ENCODE measurements at regions of chr19 and their contacts with region 1.

Region 1: DNA sequence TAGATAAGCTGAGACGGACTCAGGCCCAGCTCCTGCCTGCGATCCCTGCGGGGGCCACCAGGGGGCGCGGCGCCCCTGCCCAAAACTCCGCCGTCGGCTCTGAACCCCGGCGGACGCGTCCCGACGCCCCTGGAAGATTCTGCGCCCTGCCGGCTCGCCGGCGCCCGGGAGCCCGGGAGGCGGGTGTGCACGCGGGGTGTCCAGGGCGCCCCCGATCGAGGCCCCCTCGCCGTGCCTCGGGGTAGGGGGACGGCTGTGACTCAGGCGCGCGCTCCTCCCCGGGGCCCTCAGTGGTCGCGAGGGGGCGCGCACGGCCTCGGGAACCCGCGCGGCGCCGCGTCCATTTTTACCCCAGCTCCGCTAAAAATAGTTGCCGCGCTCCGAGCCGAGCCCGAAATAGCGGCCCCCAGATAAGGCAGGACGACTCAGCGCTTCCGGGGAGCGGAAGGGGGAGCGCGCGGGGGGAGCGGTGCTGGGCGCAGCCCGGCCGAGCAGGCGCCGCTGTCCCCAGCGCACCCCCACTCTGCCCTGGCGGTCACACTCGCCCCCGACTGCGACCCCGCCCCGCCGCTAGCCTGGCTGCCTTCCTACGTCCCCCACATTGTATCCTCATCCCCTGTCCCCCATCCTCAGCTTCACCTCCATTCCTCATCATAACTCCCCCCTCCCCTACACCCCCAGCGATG is 16.0 kb upstream of the ERCC1 start:
- DNase-seq: peak; percentile 93
- ATAC-seq: peak; percentile 79
- H3K4me3 Mint-ChIP-seq: peak overlapping the region; percentile 64
- H3K27ac Mint-ChIP-seq: peak overlapping the region; percentile 83
- H3K4me1 Mint-ChIP-seq: peaks cover 30% of the 10 kb centered on the region
- H3K27me3 Mint-ChIP-seq: no peaks in the 10 kb centered on the region

Region 2: DNA sequence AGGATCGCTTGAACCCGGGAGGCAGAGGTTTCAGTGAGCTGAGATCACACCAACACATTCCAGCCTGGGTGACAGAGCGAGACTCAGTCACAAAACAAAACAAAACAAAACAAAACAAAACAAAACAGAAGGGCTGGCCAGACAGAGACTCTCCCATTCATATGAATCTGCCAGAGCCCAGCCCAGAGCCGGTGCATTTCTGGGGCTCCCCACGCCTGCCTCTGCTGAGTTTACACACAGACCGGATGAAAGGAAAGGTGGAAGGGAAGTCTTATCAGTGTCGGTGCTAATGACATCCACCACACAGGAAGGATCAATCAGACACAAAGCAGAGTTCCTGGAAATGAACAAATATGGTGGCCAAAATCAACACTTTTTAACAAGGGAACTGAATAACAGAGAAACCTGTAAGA is 268.5 kb before region 1 on chr19:
- CTCF ChIA-PET with region 1: no interaction called
- DNase-seq: peak; percentile 75
- ATAC-seq: peak; percentile 85
- H3K4me3 Mint-ChIP-seq: peak overlapping the region; percentile 70
- H3K27ac Mint-ChIP-seq: peak overlapping the region; percentile 96
- H3K4me1 Mint-ChIP-seq: peaks cover 46% of the 10 kb centered on the region
- H3K27me3 Mint-ChIP-seq: no peaks in the 10 kb centered on the region

Region 3: GRCh38 chr19:45405435-45406225 is 34.1 kb before region 1 on chr19:
- CTCF ChIA-PET with region 1: interaction called, 23 read pairs
- DNase-seq: peak; percentile 92
- ATAC-seq: peak; percentile 65
- H3K4me3 Mint-ChIP-seq: peak overlapping the region; percentile 94
- H3K27ac Mint-ChIP-seq: peak overlapping the region; percentile 88
- H3K4me1 Mint-ChIP-seq: peaks cover 31% of the 10 kb centered on the region
- H3K27me3 Mint-ChIP-seq: peaks cover 30% of the 10 kb centered on the region

Region 4: DNA sequence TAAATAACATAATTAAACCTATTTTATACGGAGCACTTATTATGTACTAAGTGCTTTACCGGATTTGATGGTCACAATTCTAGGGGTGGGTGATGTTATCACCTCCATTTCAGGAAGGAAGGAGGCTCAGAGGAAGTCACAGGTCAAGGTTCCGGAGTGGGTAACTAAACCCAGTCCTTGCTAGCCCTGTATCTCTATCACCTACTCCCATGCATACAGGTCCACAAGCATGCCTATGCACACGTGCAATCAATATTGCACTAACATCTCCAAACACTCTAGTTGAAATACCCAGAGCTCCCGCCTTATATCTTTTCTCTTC is 10.3 kb after region 1 on chr19:
- CTCF ChIA-PET with region 1: interaction called, 42 read pairs
- DNase-seq: no peak
- ATAC-seq: peak; percentile 46
- H3K4me3 Mint-ChIP-seq: peak overlapping the region; percentile 93
- H3K27ac Mint-ChIP-seq: peak overlapping the region; percentile 99
- H3K4me1 Mint-ChIP-seq: peaks cover 46% of the 10 kb centered on the region
- H3K27me3 Mint-ChIP-seq: peaks cover 6% of the 10 kb centered on the region

Region 5: GRCh38 chr19:45469132-45469944 is 29.6 kb after region 1 on chr19:
- CTCF ChIA-PET with region 1: interaction called, 1,113 read pairs
- DNase-seq: peak; percentile 96
- ATAC-seq: peak; percentile 32
- H3K4me3 Mint-ChIP-seq: peak overlapping the region; percentile 86
- H3K27ac Mint-ChIP-seq: peak overlapping the region; percentile 96
- H3K4me1 Mint-ChIP-seq: peaks cover 24% of the 10 kb centered on the region
- H3K27me3 Mint-ChIP-seq: peaks cover 26% of the 10 kb centered on the region

Region 6: GRCh38 chr19:45496349-45496953 is 56.7 kb after region 1 on chr19:
- CTCF ChIA-PET with region 1: interaction called, 1,113 read pairs
- DNase-seq: peak; percentile 72
- ATAC-seq: peak; percentile 25
- H3K4me3 Mint-ChIP-seq: peak overlapping the region; percentile 29
- H3K27ac Mint-ChIP-seq: no peak overlapping the region
- H3K4me1 Mint-ChIP-seq: peaks cover 40% of the 10 kb centered on the region
- H3K27me3 Mint-ChIP-seq: peaks cover 25% of the 10 kb centered on the region

Region 7: GRCh38 chr19:45558399-45558878 is 118.7 kb after region 1 on chr19:
- CTCF ChIA-PET with region 1: interaction called, 14 read pairs
- DNase-seq: peak; percentile 81
- ATAC-seq: peak; percentile 97
- H3K4me3 Mint-ChIP-seq: no peak overlapping the region
- H3K27ac Mint-ChIP-seq: no peak overlapping the region
- H3K4me1 Mint-ChIP-seq: peaks cover 15% of the 10 kb centered on the region
- H3K27me3 Mint-ChIP-seq: no peaks in the 10 kb centered on the region